ENCODE measurements at regions of chr10 and their contacts with region 1.

Region 1: GRCh38 chr10:32346134-32346550 is 816 bp downstream of the EPC1 start:
- DNase-seq: peak; percentile 93
- H3K4me3 Mint-ChIP-seq: peak overlapping the region; percentile 94
- H3K27ac Mint-ChIP-seq: peak overlapping the region; percentile 98
- H3K4me1 Mint-ChIP-seq: peaks cover 70% of the 10 kb centered on the region
- H3K27me3 Mint-ChIP-seq: no peaks in the 10 kb centered on the region

Region 2: GRCh38 chr10:30433730-30434272 is 1912.3 kb before region 1 on chr10 and contains the start of gene MAP3K8:
- intact Hi-C with region 1: loop called (anchors 10 kb)
- DNase-seq: peak; percentile 87
- H3K4me3 Mint-ChIP-seq: peak within 1 kb of the TSS; percentile 94
- H3K27ac Mint-ChIP-seq: peak within 1 kb of the TSS; percentile 88
- H3K4me1 Mint-ChIP-seq: peaks cover 56% of the 10 kb centered on the region
- H3K27me3 Mint-ChIP-seq: no peaks in the 10 kb centered on the region
- total RNA-seq, gene MAP3K8: 34.7 and 37.5 TPM in 2 replicates

Region 3: DNA sequence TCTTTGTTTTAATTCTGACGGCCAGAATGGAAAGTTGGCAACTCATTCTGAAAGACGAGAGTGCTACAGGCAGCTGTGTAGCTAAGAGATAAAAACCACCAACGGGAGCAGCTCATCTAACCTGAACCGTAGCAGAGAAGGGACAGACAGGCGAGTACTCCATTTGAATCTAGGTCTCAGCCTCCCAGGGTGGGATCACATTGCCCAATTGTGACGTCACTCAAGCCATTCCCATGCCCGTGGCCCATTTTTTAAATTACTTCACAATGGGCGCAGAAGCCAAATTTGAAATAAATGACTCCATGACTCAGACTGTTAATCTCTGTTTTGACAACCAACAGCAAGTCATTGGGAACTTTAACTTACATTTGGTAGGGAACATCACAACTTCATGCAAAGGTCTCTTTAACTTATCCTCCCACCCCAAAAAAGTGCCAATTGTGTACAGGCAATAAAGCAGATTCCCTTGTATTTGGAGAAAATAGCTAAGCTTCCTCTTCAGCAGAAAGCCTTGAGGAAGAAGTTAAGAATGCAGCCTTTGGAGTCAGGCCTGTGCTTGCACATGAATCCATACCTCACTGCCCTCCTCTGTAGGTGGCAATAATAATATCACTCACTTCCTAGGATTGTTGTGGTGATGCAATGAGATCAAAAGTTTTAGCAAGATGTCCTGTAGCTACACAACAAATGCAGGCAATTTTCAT is 196.7 kb before region 1 on chr10:
- intact Hi-C with region 1: loop called (anchors 5 kb)
- DNase-seq: peak; percentile 36
- H3K4me3 Mint-ChIP-seq: peak overlapping the region; percentile 45
- H3K27ac Mint-ChIP-seq: peak overlapping the region; percentile 94
- H3K4me1 Mint-ChIP-seq: peaks cover 41% of the 10 kb centered on the region
- H3K27me3 Mint-ChIP-seq: no peaks in the 10 kb centered on the region

Region 4: GRCh38 chr10:32256613-32257437 is 89.3 kb before region 1 on chr10:
- intact Hi-C with region 1: loop called (anchors 1 kb)
- DNase-seq: peak; percentile 48
- H3K4me3 Mint-ChIP-seq: no peak overlapping the region
- H3K27ac Mint-ChIP-seq: peak overlapping the region; percentile 66
- H3K4me1 Mint-ChIP-seq: peaks cover 17% of the 10 kb centered on the region
- H3K27me3 Mint-ChIP-seq: no peaks in the 10 kb centered on the region

Region 5: GRCh38 chr10:32293581-32293980 is 52.6 kb before region 1 on chr10:
- intact Hi-C with region 1: no loop called
- DNase-seq: no peak
- H3K4me3 Mint-ChIP-seq: no peak overlapping the region
- H3K27ac Mint-ChIP-seq: no peak overlapping the region
- H3K4me1 Mint-ChIP-seq: peaks cover 16% of the 10 kb centered on the region
- H3K27me3 Mint-ChIP-seq: no peaks in the 10 kb centered on the region

Region 6: DNA sequence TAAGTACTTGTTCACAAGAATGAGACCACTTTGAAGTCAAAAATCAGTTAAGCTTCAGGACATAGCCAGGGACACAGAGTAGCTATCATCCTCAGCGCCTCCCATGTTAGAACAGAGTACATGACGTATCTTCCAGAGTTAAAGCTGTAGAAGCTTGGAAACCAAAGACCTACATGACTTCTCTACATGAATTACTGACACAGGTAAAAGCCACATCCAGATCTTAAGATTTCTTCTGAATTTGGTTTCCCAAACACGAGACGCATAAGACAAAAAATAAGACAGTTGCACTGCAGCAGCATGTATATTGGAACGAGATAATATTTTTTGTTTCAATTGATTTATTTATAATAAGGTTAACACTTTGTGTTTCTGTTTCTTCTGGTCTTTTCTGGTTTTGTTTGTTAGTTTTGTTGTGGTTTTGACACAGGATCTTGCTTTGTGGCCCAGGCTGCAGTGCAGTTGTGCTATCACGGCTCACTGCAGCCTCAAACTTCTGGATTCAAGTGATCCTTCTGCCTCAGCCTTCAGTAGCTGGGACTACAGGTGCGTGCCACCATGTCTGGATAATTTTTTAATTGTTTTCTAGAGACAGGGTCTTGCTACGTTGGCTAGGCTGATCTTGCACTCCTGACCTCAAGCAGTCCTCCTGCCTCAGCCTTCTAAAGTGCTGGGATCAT is 11.1 kb after region 1 on chr10:
- intact Hi-C with region 1: loop called (anchors 1 kb)
- DNase-seq: no peak
- H3K4me3 Mint-ChIP-seq: peak overlapping the region; percentile 61
- H3K27ac Mint-ChIP-seq: peak overlapping the region; percentile 93
- H3K4me1 Mint-ChIP-seq: peaks cover 73% of the 10 kb centered on the region
- H3K27me3 Mint-ChIP-seq: no peaks in the 10 kb centered on the region

Region 7: GRCh38 chr10:32445740-32446535 is 99.8 kb after region 1 on chr10 and contains the start of gene CCDC7:
- intact Hi-C with region 1: loop called (anchors 1 kb)
- DNase-seq: peak; percentile 83
- H3K4me3 Mint-ChIP-seq: peak within 1 kb of the TSS; percentile 98
- H3K27ac Mint-ChIP-seq: peak within 1 kb of the TSS; percentile 96
- H3K4me1 Mint-ChIP-seq: peaks cover 9% of the 10 kb centered on the region
- H3K27me3 Mint-ChIP-seq: peaks cover 3% of the 10 kb centered on the region
- total RNA-seq, gene CCDC7: 9.0 and 10.2 TPM in 2 replicates

Region 8: GRCh38 chr10:32731527-32731926 is 385.4 kb after region 1 on chr10:
- intact Hi-C with region 1: no loop called
- DNase-seq: no peak
- H3K4me3 Mint-ChIP-seq: no peak overlapping the region
- H3K27ac Mint-ChIP-seq: no peak overlapping the region
- H3K4me1 Mint-ChIP-seq: no peaks in the 10 kb centered on the region
- H3K27me3 Mint-ChIP-seq: no peaks in the 10 kb centered on the region

Region 9: GRCh38 chr10:33115738-33116719 is 769.9 kb after region 1 on chr10:
- intact Hi-C with region 1: no loop called
- DNase-seq: no peak
- H3K4me3 Mint-ChIP-seq: no peak overlapping the region
- H3K27ac Mint-ChIP-seq: no peak overlapping the region
- H3K4me1 Mint-ChIP-seq: peaks cover 65% of the 10 kb centered on the region
- H3K27me3 Mint-ChIP-seq: no peaks in the 10 kb centered on the region